Testis (tissue), 5 donors: ENCODE measurements at regions of chr22 and their contacts with region 1.

Region 1: DNA sequence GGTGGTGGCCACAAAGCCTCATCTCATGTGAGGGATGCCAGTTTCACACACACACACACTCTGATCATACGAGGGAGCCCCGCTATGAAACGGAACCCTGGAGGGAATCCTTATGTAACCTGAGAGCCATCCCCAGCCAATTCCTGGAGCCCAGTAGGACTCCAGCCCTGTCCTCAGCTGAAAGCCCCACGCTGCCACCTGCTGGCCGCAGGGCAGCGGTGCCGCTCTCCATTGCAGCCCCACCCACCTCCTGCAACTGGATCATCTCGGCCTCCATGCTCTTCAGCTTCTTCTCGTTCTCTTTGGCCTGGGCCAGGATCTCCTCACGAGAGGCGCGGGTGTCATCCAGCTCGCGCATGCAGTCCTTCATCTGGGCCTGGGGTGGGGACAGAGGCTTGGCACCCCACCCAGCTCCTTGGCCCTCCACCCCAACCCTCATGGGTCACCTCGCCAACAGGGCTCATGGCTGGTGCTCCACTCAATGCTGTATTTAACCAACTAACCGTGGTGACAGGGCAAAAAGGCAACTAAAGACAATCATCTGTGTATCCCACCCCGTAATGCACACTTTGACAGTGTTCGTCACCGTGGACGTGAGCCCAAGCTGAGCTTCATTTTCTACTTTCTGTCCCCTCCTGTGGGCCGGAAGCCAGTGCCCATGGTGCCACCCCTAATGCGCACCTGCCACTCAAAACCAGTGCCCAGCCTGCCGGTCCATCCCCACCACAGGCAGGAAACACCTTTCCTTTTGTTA is 33.7 kb downstream of the APOL1 start:
- DNase-seq: peak; percentile 88
- H3K4me3 ChIP-seq: no peak overlapping the region
- H3K27ac ChIP-seq: peak overlapping the region; percentile 60 to 71
- H3K4me1 ChIP-seq: peaks cover 21% of the 10 kb centered on the region
- H3K27me3 ChIP-seq: no peaks in the 10 kb centered on the region
- CTCF ChIP-seq: peak; percentile 92 to 94 (median 92)
- POLR2A ChIP-seq: no peak

Region 2: DNA sequence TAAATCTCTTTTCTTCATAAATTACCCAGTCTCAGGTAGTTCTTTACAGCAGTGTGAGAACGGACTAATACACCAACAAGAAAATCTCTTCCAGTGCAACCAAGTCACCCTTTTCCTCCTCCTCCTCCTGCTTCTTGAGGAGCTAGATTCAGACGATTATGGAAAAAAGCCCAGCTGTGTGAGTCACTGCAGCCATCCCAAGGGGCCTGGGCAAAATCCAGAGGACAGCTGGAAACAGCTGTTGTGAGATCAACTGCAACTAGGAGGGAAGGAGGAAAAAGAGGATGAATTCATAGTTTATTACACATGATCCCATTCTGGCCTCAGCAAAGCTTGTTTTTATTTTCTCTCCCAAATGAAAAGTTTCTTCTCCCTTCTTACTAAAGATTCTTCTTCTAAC is 290.9 kb before region 1 on chr22:
- intact Hi-C with region 1: no loop called
- DNase-seq: peak; percentile 82
- H3K4me3 ChIP-seq: no peak overlapping the region
- H3K27ac ChIP-seq: peak overlapping the region; percentile 56 to 79
- H3K4me1 ChIP-seq: peaks cover 8% of the 10 kb centered on the region
- H3K27me3 ChIP-seq: no peaks in the 10 kb centered on the region
- CTCF ChIP-seq: no peak
- POLR2A ChIP-seq: no peak

Region 3: DNA sequence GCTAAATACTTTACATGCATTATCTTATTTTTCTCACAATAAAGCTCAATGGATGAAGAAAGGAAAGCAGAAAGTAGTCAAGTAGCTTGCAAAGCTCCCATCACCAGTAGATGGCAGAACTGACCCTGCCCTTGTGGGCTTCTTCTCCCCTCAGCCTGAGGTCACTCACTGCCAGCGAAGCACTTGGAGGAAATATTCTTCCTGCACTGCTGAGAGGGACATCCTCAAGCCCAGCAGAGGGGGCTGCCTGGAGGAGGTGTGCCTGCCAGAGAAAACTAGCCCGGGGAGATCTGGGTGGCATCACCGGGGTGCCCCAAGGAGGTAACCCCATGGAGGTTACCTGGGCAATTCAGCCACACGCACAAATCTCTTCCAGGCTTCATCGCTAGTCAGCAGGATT is 91.7 kb before region 1 on chr22:
- intact Hi-C with region 1: loop called (anchors 10 kb)
- DNase-seq: peak; percentile 76
- H3K4me3 ChIP-seq: no peak overlapping the region
- H3K27ac ChIP-seq: no peak overlapping the region
- H3K4me1 ChIP-seq: peaks cover 14% of the 10 kb centered on the region
- H3K27me3 ChIP-seq: no peaks in the 10 kb centered on the region
- CTCF ChIP-seq: peak; percentile 58 to 64 (median 62)
- POLR2A ChIP-seq: no peak

Region 4: DNA sequence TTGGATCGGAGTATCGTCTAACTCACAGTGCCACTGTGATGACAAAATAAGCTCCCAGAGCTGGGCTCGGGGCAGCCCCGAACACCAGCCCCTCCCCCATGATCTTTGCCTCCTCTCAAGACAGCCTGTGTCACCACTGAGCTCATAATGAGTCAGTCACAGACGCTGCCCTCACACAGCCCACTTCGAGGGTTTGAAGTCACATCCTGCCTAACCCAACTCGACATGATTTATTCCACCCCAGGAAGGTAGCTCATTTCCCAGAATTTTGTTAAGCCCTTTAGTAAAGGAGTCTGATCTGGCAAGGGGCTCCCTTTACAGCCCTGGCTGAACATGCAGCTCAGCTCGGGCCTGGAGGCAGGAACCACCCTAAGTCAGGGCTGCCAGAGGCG is 78.4 kb after region 1 on chr22:
- intact Hi-C with region 1: no loop called
- DNase-seq: no peak
- H3K4me3 ChIP-seq: no peak overlapping the region
- H3K27ac ChIP-seq: peak overlapping the region in 1 of 2 donors; percentile 50
- H3K4me1 ChIP-seq: peaks cover 68% of the 10 kb centered on the region
- H3K27me3 ChIP-seq: no peaks in the 10 kb centered on the region
- CTCF ChIP-seq: no peak
- POLR2A ChIP-seq: no peak

Region 5: GRCh38 chr22:36383110-36383581 is 96.5 kb after region 1 on chr22:
- intact Hi-C with region 1: no loop called
- DNase-seq: no peak
- H3K4me3 ChIP-seq: no peak overlapping the region
- H3K27ac ChIP-seq: peak overlapping the region in 1 of 2 donors; percentile 36
- H3K4me1 ChIP-seq: peaks cover 20% of the 10 kb centered on the region
- H3K27me3 ChIP-seq: no peaks in the 10 kb centered on the region
- CTCF ChIP-seq: no peak
- POLR2A ChIP-seq: no peak

Region 6: DNA sequence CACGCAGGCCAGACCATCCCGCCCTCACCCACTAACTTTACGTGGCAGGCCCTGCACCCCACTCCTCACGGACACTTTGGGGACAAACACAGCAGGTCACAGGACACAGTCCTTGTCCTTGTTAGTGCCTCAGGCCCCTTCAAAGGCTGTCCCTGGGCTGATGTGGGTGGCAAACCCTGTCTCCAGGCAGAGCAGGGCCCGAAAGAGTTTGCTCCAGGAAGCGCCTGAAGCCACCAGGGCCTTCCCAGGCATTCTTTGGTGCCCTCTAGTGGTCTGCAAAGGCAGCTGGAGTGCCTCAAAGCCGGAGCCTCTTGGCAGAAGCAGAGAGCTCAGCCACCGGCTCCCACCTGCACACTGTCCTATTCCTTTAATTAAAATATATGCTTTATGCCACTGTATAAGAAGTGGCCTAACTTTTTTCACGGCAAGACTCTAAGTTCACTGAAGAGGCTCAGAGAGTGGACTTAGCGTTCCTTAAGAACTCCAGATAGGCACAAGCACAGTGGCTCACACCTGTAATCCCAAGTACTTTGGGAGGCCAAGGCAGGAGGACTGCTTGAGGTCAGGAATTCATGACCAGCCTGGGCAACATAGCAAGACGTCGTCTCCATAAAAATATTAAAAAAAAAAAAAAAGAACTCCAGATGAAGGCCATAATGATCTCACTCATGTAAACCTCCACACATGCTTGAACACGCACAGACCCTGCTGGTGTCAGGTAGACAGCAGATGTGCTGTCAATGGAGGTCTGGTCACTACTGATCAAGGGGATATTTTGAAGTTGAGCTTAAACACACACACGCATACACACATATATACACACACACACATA is 183.7 kb after region 1 on chr22:
- intact Hi-C with region 1: no loop called
- DNase-seq: peak; percentile 85
- H3K4me3 ChIP-seq: no peak overlapping the region
- H3K27ac ChIP-seq: peak overlapping the region; percentile 50 to 60
- H3K4me1 ChIP-seq: peaks cover 12% of the 10 kb centered on the region
- H3K27me3 ChIP-seq: no peaks in the 10 kb centered on the region
- CTCF ChIP-seq: peak; percentile 77 to 90 (median 85)
- POLR2A ChIP-seq: no peak